ENCODE measurements at regions of chr1 and their contacts with region 1.

Region 1: GRCh38 chr1:110890474-110891196 is 17.7 kb downstream of the CD53 start:
- DNase-seq: peak in 3 of 4 experiments; percentile 29 to 67 (median 58)
- ATAC-seq: peak; percentile 85
- H3K4me3 ChIP-seq: no peak overlapping the region
- H3K27ac ChIP-seq: peak overlapping the region; percentile 68
- H3K4me1 ChIP-seq: peaks cover 10 to 51% of the 10 kb centered on the region in 2 experiments; a peak in 4 of 5 replicates
- H3K27me3 ChIP-seq: no peaks in the 10 kb centered on the region
- CTCF ChIP-seq: no peak
- EP300 ChIP-seq: peak; percentile 70
- POLR2A ChIP-seq: no peak
- RAD21 ChIP-seq: no peak; a peak in 1 of 4 replicates

Region 2: DNA sequence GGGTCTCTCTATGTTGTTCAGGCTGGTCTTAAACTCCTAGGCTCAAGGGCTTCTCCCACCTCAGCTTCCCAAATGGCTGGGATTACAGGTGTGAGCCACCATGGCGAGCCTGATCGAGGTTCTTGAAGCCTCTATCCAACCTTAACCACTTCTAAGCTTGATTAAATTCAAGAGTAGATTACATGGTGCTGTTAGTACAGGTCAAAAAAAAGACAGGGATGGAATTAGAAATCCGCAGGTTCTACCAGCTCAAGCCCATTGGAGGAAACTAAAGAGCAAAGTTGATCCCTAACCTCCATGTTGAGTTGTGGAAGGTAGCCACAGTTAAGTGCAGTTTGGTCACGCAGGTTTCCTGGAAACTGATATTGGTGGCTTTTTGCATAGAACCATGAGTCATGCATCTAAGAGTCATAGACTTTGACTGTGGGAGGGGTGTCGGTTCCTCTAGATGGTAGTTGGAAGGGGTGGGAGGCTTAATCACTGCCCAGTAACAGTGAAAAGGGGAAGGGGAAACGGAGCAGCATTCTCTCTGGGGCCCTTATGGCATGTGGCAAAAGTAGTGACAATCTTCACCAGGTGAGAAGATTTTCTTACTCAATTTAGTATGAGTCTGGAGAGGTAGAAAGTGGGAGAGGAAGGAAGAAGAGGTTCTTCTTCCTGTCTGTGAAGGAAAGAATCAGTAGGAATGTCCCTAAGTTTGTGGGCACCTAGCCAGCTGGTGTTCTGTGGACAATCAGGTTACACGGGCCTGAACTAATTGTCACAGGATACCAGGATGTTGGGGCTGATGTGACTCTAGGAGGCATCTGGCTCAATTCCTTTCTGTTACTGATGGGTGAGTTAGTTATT is 10.7 kb before region 1 on chr1:
- CTCF ChIA-PET with region 1: no interaction called
- POLR2A ChIA-PET with region 1: interaction called, 11 read pairs
- in situ Hi-C with region 1: no loop called
- intact Hi-C with region 1: no loop called
- DNase-seq: peak; percentile 58 to 95 (median 76)
- ATAC-seq: peak; percentile 87
- H3K4me3 ChIP-seq: peak overlapping the region; percentile 5; the same call in 1 of the 2 replicates
- H3K27ac ChIP-seq: peak overlapping the region; percentile 93
- H3K4me1 ChIP-seq: peaks cover 6 to 61% of the 10 kb centered on the region in 2 experiments; a peak in 4 of 5 replicates
- H3K27me3 ChIP-seq: no peaks in the 10 kb centered on the region
- CTCF ChIP-seq: no peak
- EP300 ChIP-seq: peak; percentile 91
- POLR2A ChIP-seq: peak; percentile 66
- RAD21 ChIP-seq: peak in 1 of 2 experiments; percentile 15; a peak in 1 of 4 replicates